Activated CD8-positive, alpha-beta T cell treated with anti-CD3 and anti-CD28 coated beads, Interleukin-2, amount 10 ng/mL, durations not matched to agents 7 days and 5 days (primary cell): ENCODE measurements at regions of chr20 and their contacts with region 1.

Region 1: DNA sequence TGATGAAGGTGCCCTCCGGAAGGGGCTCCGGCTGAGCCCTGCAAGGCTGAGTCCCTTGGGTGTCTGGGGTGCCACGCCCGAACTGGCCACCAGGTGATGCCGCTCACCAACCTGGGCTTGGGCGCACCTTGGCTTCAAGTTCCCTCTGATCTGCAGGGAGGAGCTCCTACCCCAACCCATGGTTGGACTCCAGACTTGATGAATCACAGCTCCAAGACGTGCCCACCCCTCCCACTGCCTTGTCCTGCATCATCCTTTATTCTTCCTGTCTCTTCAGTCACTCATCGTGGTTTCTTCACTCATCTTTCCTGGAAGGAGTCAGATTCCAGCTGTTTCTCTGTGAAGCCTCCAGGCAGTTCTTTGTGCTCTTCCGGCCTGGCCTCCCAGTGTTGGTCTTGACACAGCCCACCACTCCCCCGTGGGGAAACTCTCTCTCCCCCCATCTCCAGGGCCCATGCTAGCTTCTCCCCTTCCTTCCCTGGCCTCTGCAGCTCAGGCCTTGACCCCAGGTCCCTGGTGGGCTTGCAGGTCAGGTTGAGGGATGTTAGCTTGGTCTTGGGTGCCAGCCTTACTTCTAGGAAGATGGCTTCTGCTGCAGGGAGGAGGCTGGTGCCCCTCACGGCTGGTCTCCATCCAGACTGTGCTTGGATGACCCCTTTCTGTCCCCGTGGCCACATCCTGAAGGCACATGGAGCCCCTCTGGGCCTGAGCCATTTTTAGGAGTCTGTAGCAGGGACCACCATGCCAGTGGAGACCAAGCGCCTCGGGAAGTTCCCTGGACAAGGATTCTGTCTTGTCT is 2.6 kb upstream of the ZBP1 start:
- DNase-seq: peak; percentile 83
- ATAC-seq: no peak
- H3K4me3 Mint-ChIP-seq: no peak overlapping the region
- H3K27ac Mint-ChIP-seq: no peak overlapping the region
- H3K4me1 Mint-ChIP-seq: peaks cover 79% of the 10 kb centered on the region
- H3K27me3 Mint-ChIP-seq: peaks cover 2% of the 10 kb centered on the region

Region 2: GRCh38 chr20:57596998-57597939 is 25.5 kb before region 1 on chr20:
- CTCF ChIA-PET with region 1: interaction called, 69 read pairs
- POLR2A ChIA-PET with region 1: interaction called, 5 read pairs
- DNase-seq: peak; percentile 77
- ATAC-seq: peak; percentile 89
- H3K4me3 Mint-ChIP-seq: no peak overlapping the region
- H3K27ac Mint-ChIP-seq: no peak overlapping the region
- H3K4me1 Mint-ChIP-seq: peaks cover 14% of the 10 kb centered on the region
- H3K27me3 Mint-ChIP-seq: peaks cover 14% of the 10 kb centered on the region

Region 3: DNA sequence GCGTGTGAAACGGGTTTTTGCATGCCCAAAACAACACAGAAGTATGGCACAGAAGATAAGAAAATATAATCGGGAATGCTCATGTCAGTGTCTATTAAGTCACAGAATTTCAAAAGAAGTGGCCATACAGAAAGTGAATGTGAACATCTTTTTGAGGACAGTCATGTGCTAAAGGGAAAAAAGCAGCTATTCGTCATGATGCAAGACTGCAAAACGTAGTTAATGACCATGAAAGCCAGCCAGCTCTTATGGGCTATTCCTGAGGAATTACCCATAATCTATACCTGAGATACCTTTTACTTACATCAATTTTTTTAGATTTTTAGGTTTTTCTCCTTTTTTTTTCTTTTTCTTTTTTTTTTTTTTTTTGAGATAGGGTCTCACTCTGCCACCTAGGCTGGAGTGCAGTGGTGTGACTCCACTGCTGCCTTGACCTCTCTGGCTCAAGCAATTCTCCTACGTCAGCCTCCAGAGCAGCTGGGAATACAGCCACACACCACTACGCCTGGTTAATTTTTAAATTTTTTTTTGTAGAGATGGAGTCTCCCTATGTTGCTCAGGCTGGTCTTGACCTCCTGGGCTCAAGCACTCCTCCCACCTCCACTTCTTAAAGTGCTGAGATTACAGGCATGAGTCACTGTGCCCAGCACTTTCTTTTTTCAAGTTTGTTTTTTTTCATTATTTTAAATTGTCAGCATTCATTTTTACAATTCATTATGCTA is 15.6 kb after region 1 on chr20:
- CTCF ChIA-PET with region 1: interaction called, 22 read pairs
- POLR2A ChIA-PET with region 1: interaction called, 3 read pairs
- DNase-seq: peak; percentile 2
- ATAC-seq: no peak
- H3K4me3 Mint-ChIP-seq: no peak overlapping the region
- H3K27ac Mint-ChIP-seq: no peak overlapping the region
- H3K4me1 Mint-ChIP-seq: peaks cover 16% of the 10 kb centered on the region
- H3K27me3 Mint-ChIP-seq: peaks cover 50% of the 10 kb centered on the region

Region 4: DNA sequence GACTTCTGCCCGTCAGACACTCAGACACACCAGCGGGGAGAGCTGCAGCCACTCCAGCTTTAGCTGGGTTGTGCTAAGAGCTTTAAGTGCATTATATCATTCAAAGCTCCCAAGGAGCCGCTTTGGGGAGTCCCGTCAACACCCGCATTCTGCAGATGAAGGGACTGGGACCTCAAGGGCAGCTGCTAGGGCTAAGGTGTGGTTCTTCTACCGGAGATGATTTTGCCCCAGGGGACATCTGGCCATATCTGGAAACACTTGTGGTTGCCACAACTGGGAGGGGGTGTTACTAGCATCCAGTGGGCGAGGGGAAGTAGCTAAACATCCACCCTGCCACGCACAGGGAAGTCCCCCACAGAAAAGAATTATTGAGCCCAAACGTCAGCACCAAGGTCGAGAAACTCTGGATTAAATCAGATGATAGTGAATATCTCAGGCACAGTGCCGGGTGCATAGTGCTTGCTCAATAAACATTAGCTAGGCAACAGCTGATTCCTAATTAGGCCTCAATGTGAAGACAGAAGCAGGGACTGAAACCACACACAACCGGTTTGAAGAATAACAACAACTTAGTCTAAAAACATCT is 57.4 kb after region 1 on chr20:
- CTCF ChIA-PET with region 1: interaction called, 12 read pairs
- POLR2A ChIA-PET with region 1: no interaction called
- DNase-seq: no peak
- ATAC-seq: no peak
- H3K4me3 Mint-ChIP-seq: no peak overlapping the region
- H3K27ac Mint-ChIP-seq: no peak overlapping the region
- H3K4me1 Mint-ChIP-seq: peaks cover 20% of the 10 kb centered on the region
- H3K27me3 Mint-ChIP-seq: peaks cover 12% of the 10 kb centered on the region

Region 5: GRCh38 chr20:58179432-58180099 is 556.8 kb after region 1 on chr20:
- CTCF ChIA-PET with region 1: interaction called, 17 read pairs
- POLR2A ChIA-PET with region 1: no interaction called
- DNase-seq: peak; percentile 66
- ATAC-seq: peak; percentile 89
- H3K4me3 Mint-ChIP-seq: peak overlapping the region; percentile 51
- H3K27ac Mint-ChIP-seq: no peak overlapping the region
- H3K4me1 Mint-ChIP-seq: peaks cover 6% of the 10 kb centered on the region
- H3K27me3 Mint-ChIP-seq: peaks cover 7% of the 10 kb centered on the region